Endothelial cell of umbilical vein (primary cell): ENCODE measurements at regions of chr11 and their contacts with region 1.

Region 1: GRCh38 chr11:32052218-32052617 is 38.7 kb upstream of the RCN1 start:
- DNase-seq: peak; percentile 61
- H3K4me3 ChIP-seq: no peak overlapping the region
- H3K27ac ChIP-seq: no peak overlapping the region
- H3K4me1 ChIP-seq: no peaks in the 10 kb centered on the region
- H3K27me3 ChIP-seq: peaks cover 28 to 30% of the 10 kb centered on the region in 2 experiments
- CTCF ChIP-seq: peak; percentile 57 to 69
- POLR2A ChIP-seq: no peak

Region 2: DNA sequence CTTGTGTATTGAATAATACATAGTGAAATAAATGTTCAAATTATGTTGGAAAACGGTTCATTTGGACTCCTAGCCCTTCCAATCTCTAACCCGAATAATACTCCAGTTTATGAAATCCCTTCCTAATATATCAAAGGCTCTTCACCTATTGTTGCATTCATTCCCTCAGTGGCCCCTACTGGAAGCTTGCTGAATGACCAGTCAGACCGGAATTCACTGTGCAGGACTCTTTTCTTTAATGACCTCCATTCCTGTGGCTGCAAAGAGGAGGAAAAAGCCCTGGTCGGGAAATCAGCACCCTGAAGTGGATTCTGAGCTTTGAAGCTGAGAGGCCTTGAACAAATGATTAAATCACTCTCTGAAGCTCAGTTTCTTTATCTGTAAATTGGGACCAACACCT is 19.6 kb after region 1 on chr11:
- CTCF ChIA-PET with region 1: interaction called, 14 read pairs
- POLR2A ChIA-PET with region 1: no interaction called
- dilution Hi-C with region 1: no loop called
- intact Hi-C with region 1: no loop called
- DNase-seq: peak; percentile 44
- H3K4me3 ChIP-seq: no peak overlapping the region
- H3K27ac ChIP-seq: no peak overlapping the region
- H3K4me1 ChIP-seq: no peaks in the 10 kb centered on the region
- H3K27me3 ChIP-seq: peaks cover 39 to 45% of the 10 kb centered on the region in 2 experiments
- CTCF ChIP-seq: peak; percentile 26 to 44
- POLR2A ChIP-seq: no peak

Region 3: DNA sequence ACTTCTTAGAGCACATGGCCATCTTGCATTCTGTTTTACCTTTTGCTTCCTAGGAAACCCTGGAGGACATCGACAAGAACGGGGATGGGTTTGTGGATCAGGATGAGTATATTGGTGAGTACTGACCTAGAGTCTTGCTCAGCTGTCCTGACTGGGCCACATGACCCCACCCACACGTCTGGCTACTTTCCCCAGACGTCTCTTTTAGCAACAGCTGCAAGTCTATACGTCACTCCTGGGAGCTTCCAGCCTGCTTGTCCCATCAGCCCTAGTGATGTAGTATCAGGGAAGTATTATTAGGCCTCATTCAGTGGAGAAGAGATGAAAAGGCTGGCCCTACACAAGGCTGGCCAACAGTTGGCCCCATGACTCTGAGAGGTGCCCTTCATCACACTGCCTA is 48.3 kb after region 1 on chr11:
- CTCF ChIA-PET with region 1: interaction called, 10 read pairs
- POLR2A ChIA-PET with region 1: no interaction called
- dilution Hi-C with region 1: no loop called
- intact Hi-C with region 1: loop called (anchors 1 kb)
- DNase-seq: no peak
- H3K4me3 ChIP-seq: no peak overlapping the region
- H3K27ac ChIP-seq: no peak overlapping the region
- H3K4me1 ChIP-seq: peaks cover 32% of the 10 kb centered on the region
- H3K27me3 ChIP-seq: no peaks in the 10 kb centered on the region
- CTCF ChIP-seq: no peak
- POLR2A ChIP-seq: no peak

Region 4: DNA sequence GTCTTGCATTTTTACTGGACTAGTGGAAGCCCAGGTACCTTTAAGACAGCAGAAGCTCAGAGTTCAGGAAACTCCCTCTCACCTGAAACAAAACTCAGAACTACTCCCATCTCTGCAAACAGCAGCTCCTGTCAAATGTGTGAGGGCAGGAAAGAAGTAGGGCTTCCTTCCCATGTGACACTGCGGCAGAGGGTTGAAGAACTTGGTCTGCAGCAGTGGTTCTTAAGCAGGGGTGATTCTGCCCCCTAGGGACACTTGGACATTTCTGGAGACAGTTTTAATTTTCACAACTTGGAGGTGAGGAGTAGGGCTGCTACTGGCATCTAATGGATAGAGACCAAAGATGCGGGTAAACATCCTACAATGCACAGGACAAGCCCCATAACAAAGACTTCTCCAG is 102.1 kb after region 1 on chr11:
- CTCF ChIA-PET with region 1: interaction called, 97 read pairs
- POLR2A ChIA-PET with region 1: no interaction called
- dilution Hi-C with region 1: loop called (anchors 25 kb)
- intact Hi-C with region 1: loop called (anchors 1 kb)
- DNase-seq: peak; percentile 55
- H3K4me3 ChIP-seq: no peak overlapping the region
- H3K27ac ChIP-seq: no peak overlapping the region
- H3K4me1 ChIP-seq: peaks cover 2% of the 10 kb centered on the region
- H3K27me3 ChIP-seq: no peaks in the 10 kb centered on the region
- CTCF ChIP-seq: peak; percentile 23 to 42
- POLR2A ChIP-seq: no peak

Region 5: GRCh38 chr11:32162351-32162750 is 110.1 kb after region 1 on chr11:
- CTCF ChIA-PET with region 1: interaction called, 97 read pairs
- POLR2A ChIA-PET with region 1: no interaction called
- dilution Hi-C with region 1: loop called (anchors 25 kb)
- intact Hi-C with region 1: no loop called
- DNase-seq: no peak
- H3K4me3 ChIP-seq: no peak overlapping the region
- H3K27ac ChIP-seq: no peak overlapping the region
- H3K4me1 ChIP-seq: no peaks in the 10 kb centered on the region
- H3K27me3 ChIP-seq: peaks cover 13 to 22% of the 10 kb centered on the region in 2 experiments
- CTCF ChIP-seq: no peak
- POLR2A ChIP-seq: no peak

Region 6: DNA sequence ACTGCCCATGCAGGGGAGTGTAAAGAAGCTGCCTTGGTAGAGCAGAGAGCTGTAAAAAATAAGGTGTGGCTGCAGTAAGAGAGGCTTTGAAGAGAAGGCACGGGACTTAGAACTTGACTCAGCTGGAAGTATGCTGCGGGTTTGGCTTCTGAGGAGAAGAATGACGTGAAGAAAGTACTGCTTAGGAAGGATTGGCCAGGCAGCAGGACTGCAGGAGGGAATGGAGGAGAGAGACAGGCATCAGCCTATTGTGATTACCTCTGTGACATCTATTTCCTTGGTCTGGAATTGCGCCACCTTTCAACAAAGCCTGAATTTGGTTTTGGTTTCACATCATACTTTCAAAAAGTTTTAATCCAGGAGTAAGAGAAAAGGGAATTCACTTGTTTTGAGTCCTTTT is 800.0 kb after region 1 on chr11:
- CTCF ChIA-PET with region 1: no interaction called
- POLR2A ChIA-PET with region 1: no interaction called
- dilution Hi-C with region 1: no loop called
- intact Hi-C with region 1: no loop called
- DNase-seq: no peak
- H3K4me3 ChIP-seq: no peak overlapping the region
- H3K27ac ChIP-seq: no peak overlapping the region
- H3K4me1 ChIP-seq: no peaks in the 10 kb centered on the region
- H3K27me3 ChIP-seq: peaks cover 5 to 13% of the 10 kb centered on the region in 2 experiments
- CTCF ChIP-seq: no peak
- POLR2A ChIP-seq: no peak